HCT116 (cell line): ENCODE measurements at regions of chr12 and their contacts with region 1.

Region 1: DNA sequence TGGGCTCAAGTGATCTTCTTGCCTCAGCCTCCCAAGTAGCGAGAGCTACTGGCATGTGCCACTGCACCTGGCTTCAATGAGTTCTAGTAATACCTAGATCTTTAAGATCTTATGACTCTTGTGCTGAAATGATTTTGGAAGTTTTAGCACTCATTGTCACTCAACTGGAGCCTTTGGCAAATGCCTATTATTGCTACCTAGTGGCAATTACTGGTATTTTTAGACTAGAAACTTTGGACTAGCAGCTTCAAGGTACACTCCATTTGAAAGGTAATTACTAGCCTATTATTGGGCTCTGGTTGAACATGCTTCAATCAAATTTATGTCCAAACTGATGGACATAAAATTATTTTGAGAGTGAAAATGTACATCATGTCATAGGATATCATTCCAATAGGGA is 80.7 kb upstream of the MUCL1 start:
- DNase-seq: no peak
- ATAC-seq: no peak
- H3K4me3 ChIP-seq: no peak overlapping the region
- H3K27ac ChIP-seq: no peak overlapping the region
- H3K4me1 ChIP-seq: no peaks in the 10 kb centered on the region
- H3K27me3 ChIP-seq: peaks cover 32% of the 10 kb centered on the region
- CTCF ChIP-seq: peak in 2 of 3 experiments; percentile 14 to 36; a peak in 3 of 6 replicates
- POLR2A ChIP-seq: no peak
- RAD21 ChIP-seq: no peak

Region 2: GRCh38 chr12:54701940-54702592 is 71.5 kb before region 1 on chr12:
- CTCF ChIA-PET with region 1: no interaction called
- POLR2A ChIA-PET with region 1: no interaction called
- RAD21 ChIA-PET with region 1: no interaction called
- intact Hi-C with region 1: no loop called
- DNase-seq: peak; percentile 37
- ATAC-seq: peak; percentile 78
- H3K4me3 ChIP-seq: no peak overlapping the region
- H3K27ac ChIP-seq: no peak overlapping the region
- H3K4me1 ChIP-seq: no peaks in the 10 kb centered on the region
- H3K27me3 ChIP-seq: peaks cover 36% of the 10 kb centered on the region
- CTCF ChIP-seq: peak; percentile 51 to 66 (median 61); a peak in 5 of 6 replicates
- POLR2A ChIP-seq: no peak
- RAD21 ChIP-seq: peak; percentile 71

Region 3: DNA sequence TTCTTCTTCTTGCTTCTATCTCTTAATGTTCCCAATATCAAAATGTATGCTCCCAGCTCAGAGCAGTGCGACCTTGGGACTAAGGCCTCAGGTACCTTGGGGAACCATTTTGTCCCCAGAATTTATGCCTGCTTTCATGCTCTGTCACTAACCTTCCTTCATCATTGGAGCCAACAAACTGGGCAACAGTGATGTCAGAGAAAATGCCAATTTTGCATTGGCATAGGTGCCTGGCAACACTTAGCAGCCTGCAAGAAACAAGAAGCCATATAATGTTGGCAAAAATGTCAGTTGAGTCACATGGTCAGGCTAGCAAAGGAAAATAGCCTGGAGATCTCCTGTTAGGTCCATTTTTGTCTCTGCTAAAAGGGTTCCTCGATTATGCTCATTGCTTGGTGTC is 27.0 kb after region 1 on chr12:
- CTCF ChIA-PET with region 1: no interaction called
- POLR2A ChIA-PET with region 1: no interaction called
- RAD21 ChIA-PET with region 1: no interaction called
- intact Hi-C with region 1: loop called (anchors 5 kb)
- DNase-seq: no peak
- ATAC-seq: no peak
- H3K4me3 ChIP-seq: no peak overlapping the region
- H3K27ac ChIP-seq: no peak overlapping the region
- H3K4me1 ChIP-seq: no peaks in the 10 kb centered on the region
- H3K27me3 ChIP-seq: peaks cover 56% of the 10 kb centered on the region
- CTCF ChIP-seq: no peak
- POLR2A ChIP-seq: no peak
- RAD21 ChIP-seq: no peak

Region 4: GRCh38 chr12:55092579-55092978 is 319.0 kb after region 1 on chr12:
- CTCF ChIA-PET with region 1: no interaction called
- POLR2A ChIA-PET with region 1: no interaction called
- RAD21 ChIA-PET with region 1: no interaction called
- intact Hi-C with region 1: no loop called
- DNase-seq: no peak
- ATAC-seq: no peak
- H3K4me3 ChIP-seq: no peak overlapping the region
- H3K27ac ChIP-seq: no peak overlapping the region
- H3K4me1 ChIP-seq: no peaks in the 10 kb centered on the region
- H3K27me3 ChIP-seq: peaks cover 51% of the 10 kb centered on the region
- CTCF ChIP-seq: peak in 1 of 3 experiments; percentile 37; a peak in 2 of 6 replicates
- POLR2A ChIP-seq: no peak
- RAD21 ChIP-seq: no peak